ENCODE measurements at regions of chr3 and their contacts with region 1.

Region 1: GRCh38 chr3:98329392-98330124 is 24.1 kb upstream of the OR5K4 start:
- DNase-seq: peak; percentile 53
- H3K4me3 Mint-ChIP-seq: no peak overlapping the region
- H3K27ac Mint-ChIP-seq: no peak overlapping the region
- H3K4me1 Mint-ChIP-seq: peaks cover 9% of the 10 kb centered on the region
- H3K27me3 Mint-ChIP-seq: peaks cover 3% of the 10 kb centered on the region

Region 2: DNA sequence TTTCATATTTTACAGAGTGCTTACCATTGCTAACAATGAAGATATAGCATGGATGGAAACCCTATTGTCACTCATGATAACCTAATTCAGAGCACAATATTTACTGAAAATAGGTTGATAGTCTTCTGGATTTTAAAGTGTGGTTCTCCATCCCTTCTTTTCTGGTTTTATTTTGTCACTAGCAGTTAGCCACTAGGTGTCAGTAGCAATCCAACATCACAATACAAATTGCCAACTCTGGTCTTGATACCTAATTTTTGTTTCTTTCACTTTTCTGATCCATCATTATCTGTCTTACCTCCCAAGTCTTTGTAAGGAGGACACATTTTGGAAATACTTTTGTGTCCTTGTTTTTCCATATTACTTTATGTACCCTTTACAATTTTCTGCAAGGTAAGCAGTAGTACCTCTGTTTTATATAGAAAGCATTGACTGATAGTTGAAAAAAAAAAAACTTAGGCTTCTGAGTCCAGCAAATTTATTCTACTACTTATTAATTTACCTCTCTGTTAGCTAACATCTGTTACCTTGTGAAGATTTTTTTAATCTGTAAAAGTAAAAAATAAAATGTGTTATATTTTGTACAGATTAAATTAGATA is 536.0 kb before region 1 on chr3:
- CTCF ChIA-PET with region 1: no interaction called
- POLR2A ChIA-PET with region 1: no interaction called
- intact Hi-C with region 1: loop called (anchors 10 kb)
- DNase-seq: no peak
- H3K4me3 Mint-ChIP-seq: no peak overlapping the region
- H3K27ac Mint-ChIP-seq: no peak overlapping the region
- H3K4me1 Mint-ChIP-seq: no peaks in the 10 kb centered on the region
- H3K27me3 Mint-ChIP-seq: no peaks in the 10 kb centered on the region

Region 3: DNA sequence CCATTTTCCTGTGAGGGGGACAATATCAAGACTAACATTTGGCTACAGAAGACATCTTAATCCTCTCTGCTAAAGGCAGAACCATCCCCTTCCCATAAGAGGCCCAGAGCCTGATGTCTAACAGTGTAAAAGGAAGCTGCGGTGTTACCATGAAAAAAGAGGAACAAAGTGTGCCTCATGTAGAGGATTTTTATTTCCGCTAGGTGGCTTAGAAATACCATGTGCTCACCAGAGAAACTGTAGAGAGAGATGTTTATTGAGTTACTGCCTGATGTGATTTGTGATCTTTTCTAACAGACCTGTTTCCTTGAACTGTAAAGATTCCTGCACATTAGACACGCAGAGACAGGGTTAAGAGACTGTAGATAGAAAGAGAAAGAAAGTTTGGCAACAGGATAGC is 141.0 kb before region 1 on chr3:
- CTCF ChIA-PET with region 1: interaction called, 6 read pairs
- POLR2A ChIA-PET with region 1: no interaction called
- intact Hi-C with region 1: loop called (anchors 1 kb)
- DNase-seq: no peak
- H3K4me3 Mint-ChIP-seq: no peak overlapping the region
- H3K27ac Mint-ChIP-seq: no peak overlapping the region
- H3K4me1 Mint-ChIP-seq: peaks cover 3% of the 10 kb centered on the region
- H3K27me3 Mint-ChIP-seq: no peaks in the 10 kb centered on the region

Region 4: GRCh38 chr3:98367467-98368246 is 38.1 kb after region 1 on chr3:
- CTCF ChIA-PET with region 1: no interaction called
- POLR2A ChIA-PET with region 1: no interaction called
- intact Hi-C with region 1: no loop called
- DNase-seq: no peak
- H3K4me3 Mint-ChIP-seq: no peak overlapping the region
- H3K27ac Mint-ChIP-seq: no peak overlapping the region
- H3K4me1 Mint-ChIP-seq: peaks cover 3% of the 10 kb centered on the region
- H3K27me3 Mint-ChIP-seq: no peaks in the 10 kb centered on the region

Region 5: DNA sequence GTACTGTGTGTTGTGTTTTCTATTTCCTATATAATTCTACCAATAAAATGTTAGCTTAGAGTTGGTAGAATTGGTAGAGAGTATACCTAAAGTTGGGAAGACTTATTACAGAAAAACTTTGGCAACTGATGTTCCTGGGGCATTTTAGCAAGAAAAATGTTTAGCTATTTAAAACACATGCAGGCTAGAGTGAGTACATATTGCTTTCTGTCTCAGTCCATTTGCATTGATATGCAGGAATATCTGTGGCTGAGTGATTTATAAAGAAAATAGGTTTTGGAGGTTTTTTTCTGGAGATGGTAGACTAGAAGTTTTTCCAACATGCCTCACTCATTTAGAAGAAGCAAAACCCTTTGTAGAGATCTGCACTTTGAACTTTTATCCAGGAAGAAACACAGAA is 103.0 kb after region 1 on chr3:
- CTCF ChIA-PET with region 1: no interaction called
- POLR2A ChIA-PET with region 1: no interaction called
- intact Hi-C with region 1: no loop called
- DNase-seq: no peak
- H3K4me3 Mint-ChIP-seq: no peak overlapping the region
- H3K27ac Mint-ChIP-seq: no peak overlapping the region
- H3K4me1 Mint-ChIP-seq: no peaks in the 10 kb centered on the region
- H3K27me3 Mint-ChIP-seq: no peaks in the 10 kb centered on the region

Region 6: GRCh38 chr3:98573181-98573728 is 243.7 kb after region 1 on chr3:
- CTCF ChIA-PET with region 1: interaction called, 4 read pairs
- POLR2A ChIA-PET with region 1: no interaction called
- intact Hi-C with region 1: loop called (anchors 1 kb)
- DNase-seq: no peak
- H3K4me3 Mint-ChIP-seq: no peak overlapping the region
- H3K27ac Mint-ChIP-seq: peak overlapping the region; percentile 66
- H3K4me1 Mint-ChIP-seq: peaks cover 54% of the 10 kb centered on the region
- H3K27me3 Mint-ChIP-seq: no peaks in the 10 kb centered on the region

Measured in activated CD4-positive, alpha-beta memory T cell treated with anti-CD3 and anti-CD28 coated beads for 36 hours (primary cell).